Activated B cell treated with CpG ODN at 0.5 μM for 24 hours (primary cell): ENCODE measurements at regions of chr9 and their contacts with region 1.

Region 1: GRCh38 chr9:133485361-133486260 is 6.7 kb upstream of the SLC2A6 start:
- DNase-seq: no peak
- ATAC-seq: peak; percentile 67
- H3K4me3 Mint-ChIP-seq: peak overlapping the region; percentile 56
- H3K27ac Mint-ChIP-seq: no peak overlapping the region
- H3K4me1 Mint-ChIP-seq: peaks cover 5% of the 10 kb centered on the region
- H3K27me3 Mint-ChIP-seq: peaks cover 1% of the 10 kb centered on the region
- CTCF ChIP-seq: no peak

Region 2: GRCh38 chr9:133023117-133023890 is 462.3 kb before region 1 on chr9:
- CTCF ChIA-PET with region 1: interaction called, 4 read pairs
- POLR2A ChIA-PET with region 1: no interaction called
- intact Hi-C with region 1: loop called (anchors 2 kb)
- DNase-seq: no peak
- ATAC-seq: no peak
- H3K4me3 Mint-ChIP-seq: no peak overlapping the region
- H3K27ac Mint-ChIP-seq: no peak overlapping the region
- H3K4me1 Mint-ChIP-seq: peaks cover 7% of the 10 kb centered on the region
- H3K27me3 Mint-ChIP-seq: no peaks in the 10 kb centered on the region
- CTCF ChIP-seq: no peak

Region 3: GRCh38 chr9:133184962-133185361 is 300.6 kb before region 1 on chr9:
- CTCF ChIA-PET with region 1: interaction called, 54 read pairs
- POLR2A ChIA-PET with region 1: interaction called, 3 read pairs
- intact Hi-C with region 1: loop called (anchors 1 kb)
- DNase-seq: no peak
- ATAC-seq: no peak
- H3K4me3 Mint-ChIP-seq: no peak overlapping the region
- H3K27ac Mint-ChIP-seq: no peak overlapping the region
- H3K4me1 Mint-ChIP-seq: peaks cover 9% of the 10 kb centered on the region
- H3K27me3 Mint-ChIP-seq: peaks cover 30% of the 10 kb centered on the region
- CTCF ChIP-seq: no peak

Region 4: DNA sequence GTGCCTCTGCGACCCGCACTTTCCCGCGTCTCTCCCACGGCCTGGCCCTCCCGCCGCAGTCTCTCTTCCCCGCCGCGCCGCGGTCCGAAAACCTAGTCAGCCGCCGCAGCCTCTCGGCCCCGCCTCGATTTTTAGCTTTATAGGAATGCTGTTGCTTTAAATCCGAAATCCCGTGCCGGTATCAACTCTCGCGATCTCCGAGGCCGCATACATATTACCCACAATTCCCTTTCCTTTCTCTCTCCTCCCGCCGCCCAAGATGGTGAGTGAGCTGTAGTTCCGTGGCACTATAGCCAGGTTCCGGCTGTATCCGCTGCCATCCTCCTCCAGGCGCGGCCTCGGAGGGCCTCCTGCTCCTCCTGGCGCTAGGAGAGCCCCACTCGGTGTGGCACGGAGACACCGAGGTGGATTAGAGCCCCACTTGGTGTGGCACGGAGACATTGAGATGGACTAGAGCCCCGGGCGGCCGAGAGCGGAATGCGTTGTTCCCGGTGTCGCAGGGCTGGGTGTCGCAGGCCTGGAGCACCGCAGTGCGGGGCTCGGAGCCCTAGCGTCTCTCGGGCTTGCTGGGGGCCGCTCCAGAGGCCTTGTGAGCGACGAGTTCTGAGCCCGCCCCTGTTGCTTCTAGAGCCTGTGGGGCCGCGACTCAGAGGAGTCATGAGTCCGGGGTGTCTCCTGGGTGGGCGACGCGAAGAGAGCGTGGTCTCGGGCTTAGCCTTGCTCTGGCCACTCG is 137.5 kb before region 1 on chr9 and contains the starts of genes MED22 and RPL7A:
- CTCF ChIA-PET with region 1: no interaction called
- POLR2A ChIA-PET with region 1: interaction called, 3 read pairs
- intact Hi-C with region 1: loop called (anchors 1 kb)
- DNase-seq: peak; percentile 82
- ATAC-seq: peak; percentile 83
- H3K4me3 Mint-ChIP-seq: peak within 1 kb of the TSS; percentile 99
- H3K27ac Mint-ChIP-seq: peak within 1 kb of the TSS; percentile 96
- H3K4me1 Mint-ChIP-seq: peaks cover 45% of the 10 kb centered on the region
- H3K27me3 Mint-ChIP-seq: no peaks in the 10 kb centered on the region
- CTCF ChIP-seq: no peak
- total RNA-seq, gene MED22: 40.7 and 45.7 TPM in 2 replicates
- total RNA-seq, gene RPL7A: 3,786 and 4,134 TPM in 2 replicates

Region 5: GRCh38 chr9:133467101-133467500 is 18.5 kb before region 1 on chr9:
- CTCF ChIA-PET with region 1: no interaction called
- POLR2A ChIA-PET with region 1: no interaction called
- intact Hi-C with region 1: no loop called
- DNase-seq: no peak
- ATAC-seq: no peak
- H3K4me3 Mint-ChIP-seq: no peak overlapping the region
- H3K27ac Mint-ChIP-seq: no peak overlapping the region
- H3K4me1 Mint-ChIP-seq: peaks cover 1% of the 10 kb centered on the region
- H3K27me3 Mint-ChIP-seq: no peaks in the 10 kb centered on the region
- CTCF ChIP-seq: no peak